Dendritic cell treated with granulocyte-macrophage colony-stimulating factor and Interleukin-4, amounts not matched to agents 40 ng/mL and 50 ng/mL, for 4 days (primary cell): ENCODE measurements at regions of chr19 and their contacts with region 1.

Region 1: DNA sequence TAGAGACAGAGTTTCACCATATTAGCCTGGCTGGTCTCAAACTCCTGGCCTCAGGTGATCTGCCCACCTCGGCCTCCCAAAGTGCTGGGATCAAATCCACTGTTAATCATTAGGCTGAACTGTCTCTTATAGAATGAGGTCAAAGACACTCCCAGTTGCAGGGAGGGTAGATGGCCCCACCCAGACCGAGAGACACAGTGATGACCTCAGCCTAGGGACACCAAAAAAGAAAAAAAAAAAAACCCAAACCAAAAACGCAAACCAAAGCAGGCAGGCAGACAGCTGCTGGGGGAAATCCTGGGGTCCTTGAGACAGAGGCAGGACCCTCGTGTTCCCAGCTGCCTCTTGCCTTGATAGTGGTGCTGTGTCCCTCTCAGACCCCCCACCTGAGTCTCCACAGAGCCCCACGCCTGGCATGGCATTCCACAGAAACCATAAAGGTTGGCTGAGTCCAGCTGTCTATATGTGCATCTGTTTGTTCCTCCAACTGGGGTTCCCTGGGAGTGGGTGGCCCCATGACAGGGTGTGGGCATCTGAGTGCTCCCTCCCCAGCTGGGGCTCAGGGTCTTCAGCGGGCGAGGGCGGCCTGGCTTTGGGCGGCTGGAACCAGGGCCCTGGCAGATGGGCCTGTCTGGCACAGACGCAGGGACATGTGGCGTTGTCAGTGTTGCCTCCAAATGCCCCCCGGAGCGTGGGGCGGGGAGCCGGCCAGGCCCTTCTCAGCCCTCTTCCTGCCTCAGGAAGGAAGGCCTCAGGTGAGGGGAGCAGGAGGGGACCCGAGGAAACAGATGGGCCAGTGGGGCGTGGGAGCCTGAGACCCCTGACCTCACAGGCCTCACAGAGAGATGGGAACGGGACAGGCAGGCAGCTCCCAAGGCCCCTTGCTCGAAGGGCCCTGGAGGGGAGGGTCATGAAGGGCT is 5.2 kb downstream of the DAND5 start:
- H3K4me3 Mint-ChIP-seq: no peak overlapping the region
- H3K27ac Mint-ChIP-seq: no peak overlapping the region
- H3K4me1 Mint-ChIP-seq: peaks cover 7% of the 10 kb centered on the region
- H3K27me3 Mint-ChIP-seq: peaks cover 9% of the 10 kb centered on the region

Region 2: GRCh38 chr19:12774584-12775555 is 199.7 kb before region 1 on chr19 and contains the start of gene HOOK2:
- intact Hi-C with region 1: no loop called
- H3K4me3 Mint-ChIP-seq: peak within 1 kb of the TSS; percentile 72
- H3K27ac Mint-ChIP-seq: peak within 1 kb of the TSS; percentile 81
- H3K4me1 Mint-ChIP-seq: peaks cover 42% of the 10 kb centered on the region
- H3K27me3 Mint-ChIP-seq: no peaks in the 10 kb centered on the region

Region 3: GRCh38 chr19:12945479-12946091 is 29.0 kb before region 1 on chr19 and contains the start of gene RAD23A:
- intact Hi-C with region 1: no loop called
- H3K4me3 Mint-ChIP-seq: peak within 1 kb of the TSS; percentile 92
- H3K27ac Mint-ChIP-seq: peak within 1 kb of the TSS; percentile 95
- H3K4me1 Mint-ChIP-seq: peaks cover 71% of the 10 kb centered on the region
- H3K27me3 Mint-ChIP-seq: no peaks in the 10 kb centered on the region

Region 4: GRCh38 chr19:13033819-13034611 is 59.5 kb after region 1 on chr19:
- intact Hi-C with region 1: loop called (anchors 5 kb)
- H3K4me3 Mint-ChIP-seq: no peak overlapping the region
- H3K27ac Mint-ChIP-seq: no peak overlapping the region
- H3K4me1 Mint-ChIP-seq: peaks cover 7% of the 10 kb centered on the region
- H3K27me3 Mint-ChIP-seq: no peaks in the 10 kb centered on the region